Activated CD4-positive, alpha-beta memory T cell treated with anti-CD3 and anti-CD28 coated beads for 36 hours (primary cell): ENCODE measurements at regions of chr7 and their contacts with region 1.

Region 1: DNA sequence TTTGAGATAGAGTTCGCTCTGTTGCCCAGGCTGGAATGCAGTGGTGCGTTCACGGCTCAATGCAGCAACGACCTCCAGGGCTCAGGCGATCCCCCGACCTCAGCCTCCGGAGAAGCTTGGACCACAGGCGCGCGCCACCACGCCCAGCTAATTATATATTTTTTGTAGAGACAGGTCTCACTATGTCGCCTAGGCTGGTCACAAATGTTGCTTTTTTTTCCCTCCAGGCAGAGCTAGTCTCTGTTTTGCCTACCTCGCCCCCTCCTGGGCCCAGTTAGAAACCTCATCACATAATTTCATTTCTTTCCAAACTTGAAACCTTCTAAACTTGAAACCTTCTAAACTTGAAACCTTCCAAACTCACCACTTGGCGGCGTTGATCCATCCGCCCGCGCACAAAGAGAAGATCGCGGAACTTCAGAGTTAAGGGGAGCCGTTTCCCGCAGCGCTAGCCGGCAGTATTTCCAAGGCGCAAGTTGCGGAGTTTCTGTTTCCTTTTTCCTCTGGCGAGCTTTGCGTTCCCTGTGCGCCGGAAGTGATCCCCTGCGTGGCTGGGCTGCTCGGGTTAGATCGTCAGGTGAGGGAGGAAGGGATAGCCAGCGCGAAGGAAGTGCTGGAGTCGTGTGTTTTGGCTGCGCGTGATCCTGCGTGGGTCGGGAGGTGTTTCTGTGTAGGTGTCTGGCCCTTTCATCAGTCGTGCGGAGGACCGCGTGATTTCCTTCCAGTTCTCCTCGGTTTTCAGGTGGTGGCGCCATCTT is at the start of gene SSBP1:
- DNase-seq: peak; percentile 96
- H3K4me3 Mint-ChIP-seq: peak within 1 kb of the TSS; percentile 99
- H3K27ac Mint-ChIP-seq: peak within 1 kb of the TSS; percentile 99
- H3K4me1 Mint-ChIP-seq: peaks cover 35% of the 10 kb centered on the region
- H3K27me3 Mint-ChIP-seq: no peaks in the 10 kb centered on the region
- total RNA-seq, gene SSBP1: 207 to 234 TPM

Region 2: GRCh38 chr7:141558544-141559183 is 179.3 kb before region 1 on chr7:
- CTCF ChIA-PET with region 1: interaction called, 3 read pairs
- POLR2A ChIA-PET with region 1: no interaction called
- intact Hi-C with region 1: loop called (anchors 2 kb)
- DNase-seq: peak; percentile 17
- H3K4me3 Mint-ChIP-seq: no peak overlapping the region
- H3K27ac Mint-ChIP-seq: peak overlapping the region; percentile 79
- H3K4me1 Mint-ChIP-seq: peaks cover 64% of the 10 kb centered on the region
- H3K27me3 Mint-ChIP-seq: no peaks in the 10 kb centered on the region

Region 3: DNA sequence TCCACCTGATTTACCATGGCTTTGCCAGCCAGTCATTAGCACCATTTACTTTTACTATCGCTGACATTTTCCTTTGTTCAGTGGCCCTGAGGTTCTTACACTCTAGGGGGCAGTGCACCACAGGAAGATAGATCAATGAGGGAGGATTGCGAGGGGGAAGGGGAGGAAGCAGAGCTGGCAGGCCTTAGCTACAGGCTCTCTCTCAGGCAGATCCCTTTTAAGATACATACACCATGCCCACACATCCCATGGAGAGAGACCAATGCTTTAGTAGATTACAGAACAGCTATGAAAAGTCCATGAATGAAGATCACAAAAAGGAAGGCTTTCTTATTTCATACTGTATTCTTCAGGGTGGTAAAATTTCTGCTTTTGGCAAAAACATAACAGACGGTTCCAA is 83.5 kb before region 1 on chr7:
- CTCF ChIA-PET with region 1: interaction called, 57 read pairs
- POLR2A ChIA-PET with region 1: interaction called, 3 read pairs
- intact Hi-C with region 1: loop called (anchors 1 kb)
- DNase-seq: peak; percentile 73
- H3K4me3 Mint-ChIP-seq: no peak overlapping the region
- H3K27ac Mint-ChIP-seq: peak overlapping the region; percentile 52
- H3K4me1 Mint-ChIP-seq: peaks cover 4% of the 10 kb centered on the region
- H3K27me3 Mint-ChIP-seq: no peaks in the 10 kb centered on the region

Region 4: DNA sequence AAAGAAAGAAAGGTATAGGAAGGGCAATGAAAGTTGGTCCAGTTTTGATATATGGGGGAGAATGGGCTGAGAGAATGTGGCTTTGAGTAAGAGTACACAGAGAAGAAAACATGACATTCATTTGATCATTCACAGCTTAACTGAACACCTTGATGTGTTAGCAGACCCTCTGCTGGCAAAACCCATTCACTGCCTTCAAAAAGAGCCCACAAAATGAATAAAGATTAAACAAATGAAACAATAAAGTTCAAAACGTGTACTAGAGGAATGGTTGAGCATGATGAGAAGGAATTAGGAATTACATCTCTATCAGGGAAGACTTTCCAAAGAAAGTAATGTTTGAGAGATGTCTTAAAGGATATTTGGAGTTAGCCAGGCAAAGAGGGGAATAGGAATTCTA is 27.7 kb before region 1 on chr7:
- CTCF ChIA-PET with region 1: interaction called, 16 read pairs
- POLR2A ChIA-PET with region 1: interaction called, 3 read pairs
- intact Hi-C with region 1: no loop called
- DNase-seq: no peak
- H3K4me3 Mint-ChIP-seq: no peak overlapping the region
- H3K27ac Mint-ChIP-seq: no peak overlapping the region
- H3K4me1 Mint-ChIP-seq: peaks cover 6% of the 10 kb centered on the region
- H3K27me3 Mint-ChIP-seq: no peaks in the 10 kb centered on the region

Region 5: GRCh38 chr7:141754939-141755338 is 16.9 kb after region 1 on chr7:
- CTCF ChIA-PET with region 1: interaction called, 3 read pairs
- POLR2A ChIA-PET with region 1: no interaction called
- intact Hi-C with region 1: loop called (anchors 1 kb)
- DNase-seq: no peak
- H3K4me3 Mint-ChIP-seq: no peak overlapping the region
- H3K27ac Mint-ChIP-seq: no peak overlapping the region
- H3K4me1 Mint-ChIP-seq: no peaks in the 10 kb centered on the region
- H3K27me3 Mint-ChIP-seq: no peaks in the 10 kb centered on the region